ENCODE measurements at regions of chr19 and their contacts with region 1.

Region 1: GRCh38 chr19:52028027-52028779 is at the start of gene ZNF614:
- DNase-seq: peak; percentile 83 to 93 (median 90)
- H3K4me3 ChIP-seq: peak within 1 kb of the TSS; percentile 58 to 98 (median 86)
- H3K27ac ChIP-seq: peak within 1 kb of the TSS; percentile 83 to 99 (median 95)
- H3K27me3 ChIP-seq: no peaks in the 10 kb centered on the region
- CTCF ChIP-seq: peak in 14 of 56 donors; percentile 7 to 40 (median 18)
- total RNA-seq, gene ZNF614: 7.1 to 15.2 (median 9.7) TPM

Region 2: GRCh38 chr19:51986309-51987291 is 41.6 kb before region 1 on chr19 and contains the start of gene ZNF350:
- intact Hi-C with region 1: loop called (anchors 5 kb)
- DNase-seq: peak; percentile 91 to 99 (median 96)
- H3K4me3 ChIP-seq: peak within 1 kb of the TSS; percentile 59 to 98 (median 84)
- H3K27ac ChIP-seq: peak within 1 kb of the TSS in 50 of 59 donors; percentile 9 to 92 (median 62)
- H3K27me3 ChIP-seq: no peaks in the 10 kb centered on the region
- CTCF ChIP-seq: peak in 28 of 56 donors; percentile 4 to 54 (median 34)
- total RNA-seq, gene ZNF350: 8.6 to 24.7 (median 13.9) TPM

Region 3: GRCh38 chr19:52007806-52008557 is 20.2 kb before region 1 on chr19 and contains the start of gene ZNF615:
- intact Hi-C with region 1: loop called in 1 of 2 experiments (anchors 1 kb)
- DNase-seq: peak; percentile 87 to 95 (median 94)
- H3K4me3 ChIP-seq: peak within 1 kb of the TSS; percentile 41 to 96 (median 87)
- H3K27ac ChIP-seq: peak within 1 kb of the TSS; percentile 63 to 97 (median 90)
- H3K27me3 ChIP-seq: no peaks in the 10 kb centered on the region
- CTCF ChIP-seq: peak in 19 of 56 donors; percentile 3 to 47 (median 20)
- total RNA-seq, gene ZNF615: 15.5 to 29.9 (median 22.6) TPM

Region 4: DNA sequence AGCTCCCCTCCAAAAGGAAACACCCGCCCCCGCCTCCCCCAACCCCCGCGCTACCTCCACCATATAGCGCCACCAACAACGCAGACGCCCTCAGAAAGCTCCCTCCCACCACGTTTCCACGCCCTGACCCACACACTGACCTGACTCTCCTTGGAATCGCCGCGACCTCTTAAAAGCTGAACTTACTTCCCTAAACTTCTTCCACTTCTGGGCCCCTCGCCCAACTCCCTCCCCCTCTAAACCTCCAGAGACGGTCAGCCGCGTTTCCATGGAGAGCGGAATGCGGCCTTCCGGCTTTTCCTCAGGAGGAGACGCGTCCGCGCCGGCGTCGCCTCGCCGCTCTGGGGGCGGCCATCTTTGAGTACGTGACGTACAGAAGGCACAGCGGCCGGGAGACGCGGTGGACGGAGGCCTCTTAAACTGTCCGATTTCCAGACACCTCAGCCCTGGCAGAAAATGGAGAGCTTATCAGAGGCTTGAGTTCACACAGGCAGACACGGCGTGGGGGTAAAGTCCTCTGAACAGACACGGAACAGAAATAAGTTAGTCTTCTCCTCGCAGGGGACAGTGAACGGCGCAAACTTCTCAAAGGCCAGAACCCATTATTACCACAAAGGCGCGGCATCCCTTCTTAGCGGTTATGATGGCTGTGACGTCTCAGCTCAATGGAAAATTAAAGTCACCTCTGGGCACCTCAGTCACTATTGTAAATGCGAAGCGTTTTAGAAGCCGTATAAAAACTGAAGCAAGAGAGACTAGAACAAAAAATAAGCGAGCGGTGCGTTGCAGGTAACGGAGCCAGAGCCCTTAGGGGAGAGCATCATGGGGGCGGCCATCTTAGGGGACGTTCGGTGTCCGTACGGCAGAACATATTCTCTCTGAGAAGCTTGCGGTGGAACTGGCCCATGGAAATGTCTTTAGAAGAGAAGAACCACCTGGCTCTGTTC is 20.6 kb after region 1 on chr19 and contains the start of gene ZNF432:
- intact Hi-C with region 1: loop called (anchors 1 kb)
- DNase-seq: peak; percentile 80 to 95 (median 93)
- H3K4me3 ChIP-seq: peak within 1 kb of the TSS; percentile 53 to 89 (median 76)
- H3K27ac ChIP-seq: peak within 1 kb of the TSS; percentile 86 to 99 (median 97)
- H3K27me3 ChIP-seq: no peaks in the 10 kb centered on the region
- CTCF ChIP-seq: peak in 21 of 56 donors; percentile 2 to 42 (median 17)
- total RNA-seq, gene ZNF432: 11.0 to 33.6 (median 18.4) TPM

Region 5: DNA sequence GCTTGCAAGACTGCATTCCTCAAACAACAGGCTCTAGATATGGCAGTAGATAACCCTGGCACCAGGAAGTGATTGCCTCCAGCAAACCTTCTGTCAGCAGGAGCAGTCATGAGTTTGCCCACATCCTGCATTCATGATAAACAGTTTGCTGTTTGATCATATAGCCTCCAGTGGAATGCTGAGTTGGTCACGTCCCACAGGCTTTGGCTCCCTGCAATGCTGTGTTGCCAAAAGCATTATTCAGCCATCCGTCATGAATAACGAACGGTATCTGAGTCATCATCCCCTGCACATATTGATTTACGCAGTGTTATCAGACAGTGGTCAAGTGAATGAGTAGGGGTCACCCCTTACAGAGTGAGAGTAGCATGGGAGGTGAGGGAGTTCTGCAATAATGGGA is 42.3 kb after region 1 on chr19:
- intact Hi-C with region 1: no loop called
- DNase-seq: no peak
- H3K4me3 ChIP-seq: no peak overlapping the region
- H3K27ac ChIP-seq: no peak overlapping the region
- H3K27me3 ChIP-seq: no peaks in the 10 kb centered on the region
- CTCF ChIP-seq: no peak

Region 6: DNA sequence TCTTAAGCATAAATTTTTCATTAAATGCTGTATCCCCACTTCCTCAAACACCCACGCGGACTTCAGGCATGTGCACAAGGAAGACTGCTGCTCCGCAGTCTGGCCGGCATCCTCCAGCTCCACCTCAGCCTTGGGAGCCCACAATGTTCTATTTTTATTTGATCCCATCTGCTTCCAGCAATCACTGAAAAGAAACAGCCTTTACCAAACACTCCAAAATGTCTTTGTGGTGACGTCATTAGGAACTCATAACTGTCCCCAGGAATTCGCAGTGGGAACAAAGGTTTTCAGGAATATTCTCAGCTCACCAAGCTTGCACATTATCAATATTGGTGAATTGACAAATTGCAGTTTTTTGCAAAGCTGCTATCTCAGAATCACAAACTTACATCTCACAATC is 82.5 kb after region 1 on chr19:
- intact Hi-C with region 1: no loop called
- DNase-seq: no peak
- H3K4me3 ChIP-seq: no peak overlapping the region
- H3K27ac ChIP-seq: no peak overlapping the region
- H3K27me3 ChIP-seq: no peaks in the 10 kb centered on the region
- CTCF ChIP-seq: no peak

Measured in dorsolateral prefrontal cortex (tissue), 120 donors.